HCT116 (cell line): ENCODE measurements at regions of chr5 and their contacts with region 1.

Region 1: DNA sequence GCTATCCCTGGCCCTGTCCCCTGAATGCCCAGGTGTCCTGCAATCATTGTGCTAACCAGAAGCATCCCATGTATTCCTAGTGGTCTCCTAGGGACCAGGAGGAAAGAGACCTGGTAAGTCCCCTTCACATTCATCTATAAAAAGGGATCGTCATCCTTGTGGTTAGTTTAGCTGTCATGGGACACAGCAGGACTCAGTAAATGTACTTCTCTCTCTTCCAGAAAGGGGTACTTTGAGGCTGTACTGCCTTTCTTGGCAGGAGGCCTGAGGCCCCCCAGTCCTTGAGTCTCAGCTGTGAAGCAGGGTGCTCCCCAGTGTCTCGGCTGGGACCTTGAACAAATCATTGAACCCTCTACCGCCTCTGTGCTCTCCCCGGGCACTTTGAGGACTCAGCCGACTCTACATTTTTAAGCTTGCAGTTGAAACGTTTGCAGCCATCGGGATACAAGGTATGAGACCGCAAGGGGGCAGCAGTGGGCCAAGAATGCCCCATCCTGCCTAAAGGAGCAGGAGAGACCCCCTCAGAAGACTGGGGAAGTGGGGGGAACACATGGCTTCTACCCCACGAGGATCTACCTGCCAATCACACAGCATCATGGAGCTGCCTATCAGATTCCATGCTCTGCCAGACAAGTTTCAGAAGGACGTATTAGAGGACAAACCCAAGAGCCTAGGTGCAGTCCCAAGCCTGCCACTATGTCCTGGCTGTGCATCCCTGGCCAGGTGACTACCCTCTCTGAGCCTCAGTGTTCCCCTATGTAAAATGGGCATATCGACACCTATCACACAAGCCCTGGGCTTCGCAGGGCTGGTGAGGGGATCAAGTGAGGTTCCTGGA is 2.4 kb upstream of the PHYKPL start:
- DNase-seq: peak; percentile 70
- ATAC-seq: peak; percentile 51
- H3K4me3 ChIP-seq: no peak overlapping the region
- H3K27ac ChIP-seq: no peak overlapping the region
- H3K4me1 ChIP-seq: peaks cover 13 to 31% of the 10 kb centered on the region in 2 experiments
- H3K27me3 ChIP-seq: no peaks in the 10 kb centered on the region
- CTCF ChIP-seq: peak in 2 of 3 experiments; percentile 84 to 90; a peak in 4 of 6 replicates
- POLR2A ChIP-seq: no peak
- RAD21 ChIP-seq: no peak

Region 2: DNA sequence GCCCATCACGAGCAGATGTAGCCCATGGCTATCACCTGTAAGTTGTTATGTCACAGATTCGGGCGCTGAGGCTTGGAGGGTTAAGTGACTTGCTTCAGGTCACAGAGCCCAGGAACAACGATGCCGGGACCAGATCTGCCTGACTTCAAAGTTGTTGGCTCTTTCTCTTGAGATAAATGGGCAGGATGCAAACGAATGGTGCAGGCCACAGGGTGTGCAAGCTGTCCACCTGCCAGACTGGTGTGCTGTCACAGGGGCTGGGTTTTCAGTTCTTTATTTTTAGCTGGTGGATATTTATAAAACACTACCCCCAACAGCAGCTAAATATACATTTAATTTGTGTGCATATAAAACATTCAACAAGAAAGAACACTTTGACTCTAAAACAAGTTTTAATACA is 15.3 kb after region 1 on chr5:
- CTCF ChIA-PET with region 1: interaction called, 13 read pairs
- POLR2A ChIA-PET with region 1: no interaction called
- RAD21 ChIA-PET with region 1: no interaction called
- intact Hi-C with region 1: no loop called
- DNase-seq: no peak
- ATAC-seq: no peak
- H3K4me3 ChIP-seq: no peak overlapping the region
- H3K27ac ChIP-seq: no peak overlapping the region
- H3K4me1 ChIP-seq: no peaks in the 10 kb centered on the region
- H3K27me3 ChIP-seq: no peaks in the 10 kb centered on the region
- CTCF ChIP-seq: no peak
- POLR2A ChIP-seq: no peak
- RAD21 ChIP-seq: no peak